Lower leg skin (tissue), 4 donors: ENCODE measurements at regions of chr11 and their contacts with region 1.

Region 1: GRCh38 chr11:124110201-124110600 is 5.0 kb upstream of the VWA5A start:
- DNase-seq: no peak
- H3K4me3 ChIP-seq: no peak overlapping the region
- CTCF ChIP-seq: no peak
- POLR2A ChIP-seq: no peak

Region 2: GRCh38 chr11:124085323-124086004 is 24.7 kb before region 1 on chr11:
- intact Hi-C with region 1: loop called (anchors 2 kb)
- DNase-seq: no peak
- H3K4me3 ChIP-seq: no peak overlapping the region
- CTCF ChIP-seq: no peak
- POLR2A ChIP-seq: no peak

Region 3: GRCh38 chr11:124359566-124359965 is 249.4 kb after region 1 on chr11:
- intact Hi-C with region 1: no loop called
- DNase-seq: no peak
- H3K4me3 ChIP-seq: no peak overlapping the region
- CTCF ChIP-seq: no peak
- POLR2A ChIP-seq: no peak